Calu3 (cell line): ENCODE measurements at regions of chr11 and their contacts with region 1.

Region 1: DNA sequence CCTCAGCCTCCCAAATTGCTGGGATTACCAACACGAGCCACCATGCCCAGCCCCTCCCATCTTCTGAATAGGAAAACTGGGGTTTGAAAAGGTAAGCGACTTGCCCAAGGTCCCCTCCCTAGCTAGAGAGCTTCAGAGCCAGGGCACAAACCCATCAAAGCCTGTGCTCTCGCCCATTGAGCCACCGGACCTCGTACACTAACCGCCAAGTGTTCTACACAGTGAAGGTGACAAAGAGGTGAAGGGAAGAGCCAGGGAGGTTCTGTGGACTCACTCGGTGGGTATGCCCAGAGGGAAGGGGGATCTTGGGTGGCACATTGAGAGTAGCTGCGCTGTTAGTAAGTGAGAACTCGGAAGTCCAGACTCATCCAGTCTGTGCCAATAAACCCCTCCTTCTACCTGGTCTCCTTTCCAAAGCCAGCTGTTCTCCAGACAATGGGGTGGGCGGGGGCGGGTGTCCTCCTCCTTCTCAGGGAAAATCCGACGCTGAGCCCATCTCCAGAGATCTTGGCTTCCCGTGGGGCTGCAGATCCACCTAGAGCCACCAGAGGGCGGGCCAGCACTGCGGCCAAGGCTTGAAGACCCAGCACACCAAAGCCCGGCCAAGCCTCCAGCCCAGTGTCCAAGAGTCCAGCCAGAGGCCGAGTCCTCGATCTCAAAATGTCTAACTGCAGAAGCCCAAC is 3.2 kb upstream of the RTN4RL2 start:
- DNase-seq: peak; percentile 88
- H3K4me3 Mint-ChIP-seq: peak overlapping the region; percentile 9
- H3K27ac Mint-ChIP-seq: no peak overlapping the region
- H3K4me1 Mint-ChIP-seq: peaks cover 43% of the 10 kb centered on the region
- H3K27me3 Mint-ChIP-seq: peaks cover 42% of the 10 kb centered on the region
- CTCF ChIP-seq: peak; percentile 96

Region 2: GRCh38 chr11:57530596-57531507 is 73.8 kb after region 1 on chr11 and contains the start of gene TIMM10:
- CTCF ChIA-PET with region 1: interaction called, 6 read pairs
- intact Hi-C with region 1: loop called (anchors 1 kb)
- DNase-seq: peak; percentile 91
- H3K4me3 Mint-ChIP-seq: peak within 1 kb of the TSS; percentile 78
- H3K27ac Mint-ChIP-seq: peak within 1 kb of the TSS; percentile 65
- H3K4me1 Mint-ChIP-seq: peaks cover 12% of the 10 kb centered on the region
- H3K27me3 Mint-ChIP-seq: peaks cover 10% of the 10 kb centered on the region
- CTCF ChIP-seq: no peak
- total RNA-seq, gene TIMM10: 68.5 and 73.5 TPM in 2 replicates

Region 3: GRCh38 chr11:57644748-57645688 is 187.9 kb after region 1 on chr11:
- CTCF ChIA-PET with region 1: interaction called, 8 read pairs
- intact Hi-C with region 1: loop called (anchors 2 kb)
- DNase-seq: peak; percentile 88
- H3K4me3 Mint-ChIP-seq: no peak overlapping the region
- H3K27ac Mint-ChIP-seq: no peak overlapping the region
- H3K4me1 Mint-ChIP-seq: peaks cover 28% of the 10 kb centered on the region
- H3K27me3 Mint-ChIP-seq: peaks cover 66% of the 10 kb centered on the region
- CTCF ChIP-seq: peak; percentile 73